ENCODE measurements at regions of chr10 and their contacts with region 1.

Region 1: DNA sequence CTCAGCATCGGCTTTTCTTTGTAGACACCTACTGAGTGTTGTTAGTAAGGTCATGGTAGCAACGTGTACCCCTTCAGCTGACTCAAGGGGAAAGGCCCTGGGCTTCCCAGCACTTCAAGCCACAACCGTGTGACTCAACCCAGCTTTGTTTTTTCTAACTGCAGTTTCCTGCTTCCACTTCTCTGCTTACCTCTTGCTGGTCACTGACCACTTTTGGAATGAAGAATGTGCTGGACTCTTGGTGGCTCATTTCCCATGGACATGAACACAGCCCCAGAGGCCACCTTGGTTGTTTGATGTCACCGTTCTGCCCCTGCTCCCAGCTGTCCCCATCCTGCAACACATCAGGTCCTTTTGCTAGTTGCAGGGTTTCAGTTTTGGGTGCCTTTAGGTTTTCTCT is 69.5 kb upstream of the ZNF438 start:
- DNase-seq: peak; percentile 72
- H3K4me3 Mint-ChIP-seq: peak overlapping the region; percentile 51
- H3K27ac Mint-ChIP-seq: peak overlapping the region; percentile 94
- H3K4me1 Mint-ChIP-seq: peaks cover 81% of the 10 kb centered on the region
- H3K27me3 Mint-ChIP-seq: no peaks in the 10 kb centered on the region

Region 2: GRCh38 chr10:30986053-30986555 is 115.0 kb before region 1 on chr10:
- intact Hi-C with region 1: loop called (anchors 5 kb)
- DNase-seq: no peak
- H3K4me3 Mint-ChIP-seq: peak overlapping the region; percentile 5
- H3K27ac Mint-ChIP-seq: peak overlapping the region; percentile 85
- H3K4me1 Mint-ChIP-seq: peaks cover 13% of the 10 kb centered on the region
- H3K27me3 Mint-ChIP-seq: no peaks in the 10 kb centered on the region

Region 3: GRCh38 chr10:31075434-31075833 is 25.7 kb before region 1 on chr10:
- intact Hi-C with region 1: no loop called
- DNase-seq: no peak
- H3K4me3 Mint-ChIP-seq: no peak overlapping the region
- H3K27ac Mint-ChIP-seq: no peak overlapping the region
- H3K4me1 Mint-ChIP-seq: peaks cover 8% of the 10 kb centered on the region
- H3K27me3 Mint-ChIP-seq: peaks cover 18% of the 10 kb centered on the region

Region 4: DNA sequence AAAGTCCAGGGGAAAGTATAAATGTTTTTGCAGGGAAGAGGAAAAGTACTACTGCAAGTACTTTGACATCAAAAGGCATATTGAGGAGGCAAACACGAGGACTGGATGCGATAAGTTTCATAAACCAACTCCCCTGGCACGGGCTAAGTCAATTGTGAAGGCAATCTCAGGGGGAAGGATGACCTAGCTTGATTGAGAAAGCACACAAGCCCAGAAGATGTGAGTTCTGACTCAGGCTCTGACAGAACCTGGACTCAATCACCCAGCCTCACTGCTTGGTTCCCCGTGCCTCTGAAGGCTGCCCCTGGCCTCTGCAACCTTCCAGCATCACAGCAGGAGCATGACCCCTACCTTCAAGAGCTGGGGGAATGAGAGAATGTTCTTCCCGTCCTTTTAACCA is 23.7 kb after region 1 on chr10:
- intact Hi-C with region 1: loop called (anchors 1 kb)
- DNase-seq: no peak
- H3K4me3 Mint-ChIP-seq: no peak overlapping the region
- H3K27ac Mint-ChIP-seq: peak overlapping the region; percentile 30
- H3K4me1 Mint-ChIP-seq: peaks cover 51% of the 10 kb centered on the region
- H3K27me3 Mint-ChIP-seq: no peaks in the 10 kb centered on the region

Region 5: DNA sequence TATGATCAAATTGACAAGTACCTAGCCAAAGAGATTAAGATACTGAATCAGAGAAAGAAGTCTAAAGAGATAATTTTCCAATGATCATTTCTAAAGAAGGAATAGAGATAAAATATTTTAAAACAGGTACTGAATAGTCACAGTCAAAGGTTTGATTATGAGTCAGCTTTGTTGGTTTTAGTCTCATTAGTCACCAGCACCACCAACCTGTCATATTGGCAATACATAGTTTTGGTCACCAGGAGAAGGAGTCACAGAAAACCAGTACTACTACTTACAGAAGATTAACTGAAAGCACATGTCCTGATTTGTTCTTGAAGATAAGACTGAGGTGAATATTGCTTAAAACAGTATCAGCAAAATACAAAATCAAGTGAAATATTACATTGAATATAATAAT is 252.5 kb after region 1 on chr10:
- intact Hi-C with region 1: loop called (anchors 2 kb)
- DNase-seq: no peak
- H3K4me3 Mint-ChIP-seq: no peak overlapping the region
- H3K27ac Mint-ChIP-seq: peak overlapping the region; percentile 85
- H3K4me1 Mint-ChIP-seq: peaks cover 37% of the 10 kb centered on the region
- H3K27me3 Mint-ChIP-seq: no peaks in the 10 kb centered on the region